ENCODE measurements at regions of chr1 and their contacts with region 1.

Region 1: DNA sequence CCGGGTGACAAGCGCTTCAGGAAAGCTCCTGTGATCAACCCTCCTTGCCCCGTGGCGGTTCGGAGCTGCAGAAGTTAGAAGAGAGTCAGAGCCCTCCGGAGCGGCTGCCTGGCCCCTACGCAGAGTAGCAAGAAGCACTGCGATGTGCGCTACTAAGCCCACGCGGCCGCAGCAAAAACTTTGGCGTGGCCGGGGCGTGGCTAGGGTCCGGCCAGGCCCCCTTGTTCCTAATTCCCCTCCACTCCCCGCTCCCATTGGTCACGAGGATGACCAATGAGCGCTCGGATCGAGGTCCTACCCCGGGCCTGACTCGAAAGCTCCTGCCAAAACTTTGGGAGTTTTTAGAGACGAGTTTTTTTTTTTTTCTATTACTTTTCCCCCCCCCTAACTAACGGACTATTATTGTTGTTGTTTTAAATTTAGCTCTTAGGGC is at the start of gene HLX:
- DNase-seq: peak; percentile 90 to 95
- ATAC-seq: peak; percentile 87 to 95 (median 92)
- H3K4me3 ChIP-seq: peak within 1 kb of the TSS; percentile 70 to 98 (median 80)
- H3K27ac ChIP-seq: peak within 1 kb of the TSS; percentile 94 to 99 (median 97)
- H3K4me1 ChIP-seq: peaks cover 0 to 71% (median 37%) of the 10 kb centered on the region in 9 donors
- H3K27me3 ChIP-seq: peaks cover 0 to 26% (median 0%) of the 10 kb centered on the region in 7 donors
- CTCF ChIP-seq: no peak
- total RNA-seq, gene HLX: 4.3 to 13.8 (median 6.7) TPM

Region 2: DNA sequence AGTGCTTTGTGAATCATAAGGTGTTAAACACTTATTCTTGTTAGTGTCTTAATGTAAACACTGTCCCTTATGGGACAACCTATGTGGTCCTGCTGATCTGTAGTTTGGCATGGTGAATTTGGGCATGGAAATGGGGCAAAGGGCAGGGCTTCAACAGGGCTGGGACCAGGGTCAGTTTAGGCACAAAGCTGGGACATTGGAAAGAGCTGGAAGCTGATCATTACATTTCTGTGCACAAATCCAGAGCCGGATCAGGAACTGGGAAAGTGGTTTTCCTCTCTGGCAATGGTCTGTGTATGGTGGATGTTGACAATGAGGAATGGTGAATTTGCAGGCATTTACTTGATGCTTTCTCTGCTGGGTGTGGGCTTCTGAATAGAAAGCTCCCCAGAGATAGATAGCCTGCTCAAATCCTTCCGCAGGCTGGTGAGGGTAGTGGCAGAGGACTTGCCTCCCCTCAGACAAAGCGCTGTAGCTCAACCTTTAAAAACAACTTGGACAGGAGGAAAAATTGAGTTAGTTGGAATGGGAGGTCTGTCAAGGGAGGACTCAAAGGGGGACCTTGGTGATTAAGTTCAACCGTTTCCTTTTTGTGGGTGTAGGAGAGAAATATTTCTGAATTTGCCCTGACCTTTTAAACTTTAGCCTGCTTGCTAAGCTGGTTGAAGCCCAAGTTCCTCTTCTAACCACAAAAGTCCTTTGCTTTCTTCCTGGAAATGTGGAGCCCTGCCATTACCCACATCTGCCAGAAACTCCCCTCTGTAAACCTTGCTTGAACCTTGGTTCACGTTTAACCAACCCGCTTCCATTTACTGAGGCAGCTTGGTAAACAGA is 35.4 kb after region 1 on chr1:
- intact Hi-C with region 1: no loop called
- DNase-seq: no peak
- ATAC-seq: peak in 1 of 8 donors; percentile 25
- H3K4me3 ChIP-seq: no peak overlapping the region
- H3K27ac ChIP-seq: no peak overlapping the region
- H3K4me1 ChIP-seq: peaks cover 0 to 24% (median 0%) of the 10 kb centered on the region in 9 donors
- H3K27me3 ChIP-seq: peaks cover 0 to 4% (median 0%) of the 10 kb centered on the region in 7 donors
- CTCF ChIP-seq: no peak

Region 3: GRCh38 chr1:220990427-220991339 is 111.6 kb after region 1 on chr1:
- intact Hi-C with region 1: loop called in 2 of 10 experiments (anchors 10 kb)
- DNase-seq: no peak
- ATAC-seq: peak in 2 of 8 donors; percentile 16 to 55
- H3K4me3 ChIP-seq: no peak overlapping the region
- H3K27ac ChIP-seq: no peak overlapping the region
- H3K4me1 ChIP-seq: peaks cover 0 to 10% (median 0%) of the 10 kb centered on the region in 9 donors
- H3K27me3 ChIP-seq: peaks cover 0 to 12% (median 0%) of the 10 kb centered on the region in 7 donors
- CTCF ChIP-seq: peak in 1 of 9 donors; percentile 30

Region 4: GRCh38 chr1:221053889-221054288 is 174.8 kb after region 1 on chr1:
- intact Hi-C with region 1: no loop called
- DNase-seq: no peak
- ATAC-seq: no peak
- H3K4me3 ChIP-seq: no peak overlapping the region
- H3K27ac ChIP-seq: no peak overlapping the region
- H3K4me1 ChIP-seq: no peaks in the 10 kb centered on the region
- H3K27me3 ChIP-seq: no peaks in the 10 kb centered on the region
- CTCF ChIP-seq: no peak

Region 5: GRCh38 chr1:221174330-221174999 is 295.4 kb after region 1 on chr1:
- intact Hi-C with region 1: loop called in 1 of 10 experiments (anchors 10 kb)
- DNase-seq: peak; percentile 79 to 82
- ATAC-seq: peak; percentile 97 to 99 (median 99)
- H3K4me3 ChIP-seq: no peak overlapping the region
- H3K27ac ChIP-seq: peak overlapping the region in 5 of 10 donors; percentile 8 to 49 (median 26)
- H3K4me1 ChIP-seq: peaks cover 4 to 15% (median 11%) of the 10 kb centered on the region in 9 donors
- H3K27me3 ChIP-seq: no peaks in the 10 kb centered on the region
- CTCF ChIP-seq: peak; percentile 36 to 69 (median 56)

Region 6: GRCh38 chr1:221263831-221264767 is 385.0 kb after region 1 on chr1:
- intact Hi-C with region 1: loop called in 1 of 10 experiments (anchors 5 kb)
- DNase-seq: peak in 1 of 2 donors; percentile 68
- ATAC-seq: peak; percentile 41 to 87 (median 82)
- H3K4me3 ChIP-seq: peak overlapping the region in 2 of 10 donors; percentile 1 to 8
- H3K27ac ChIP-seq: peak overlapping the region in 8 of 10 donors; percentile 41 to 80 (median 62)
- H3K4me1 ChIP-seq: peaks cover 0 to 22% (median 17%) of the 10 kb centered on the region in 9 donors
- H3K27me3 ChIP-seq: no peaks in the 10 kb centered on the region
- CTCF ChIP-seq: peak; percentile 24 to 69 (median 57)

Region 7: DNA sequence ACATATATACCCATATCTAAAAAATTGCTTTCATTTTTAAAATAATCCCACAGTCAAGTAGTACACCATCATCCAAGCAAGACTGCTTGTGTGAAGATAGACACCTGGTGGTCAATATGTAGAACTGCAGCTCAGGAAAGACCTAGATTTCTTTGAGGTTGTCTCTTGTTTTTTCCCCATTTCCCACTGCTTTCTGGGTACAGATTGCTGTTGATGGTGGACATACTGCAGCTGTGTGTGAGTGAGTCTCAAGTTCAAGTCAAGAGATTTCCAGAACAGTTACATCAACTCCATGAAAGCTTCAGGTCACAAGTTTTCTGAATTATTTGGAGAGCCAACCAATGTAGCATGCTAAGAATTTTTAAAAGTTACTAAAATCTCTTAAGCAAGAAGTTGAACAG is 556.4 kb after region 1 on chr1:
- intact Hi-C with region 1: loop called in 8 of 10 experiments (anchors 1 to 10 kb)
- DNase-seq: no peak
- ATAC-seq: peak in 7 of 8 donors; percentile 38 to 83 (median 76)
- H3K4me3 ChIP-seq: no peak overlapping the region
- H3K27ac ChIP-seq: peak overlapping the region in 2 of 10 donors; percentile 23 to 38
- H3K4me1 ChIP-seq: peaks cover 0 to 28% (median 8%) of the 10 kb centered on the region in 9 donors
- H3K27me3 ChIP-seq: no peaks in the 10 kb centered on the region
- CTCF ChIP-seq: peak; percentile 87 to 96 (median 95)

Measured in heart right ventricle (tissue), 16 donors.